ENCODE measurements at regions of chr6 and their contacts with region 1.

Region 1: DNA sequence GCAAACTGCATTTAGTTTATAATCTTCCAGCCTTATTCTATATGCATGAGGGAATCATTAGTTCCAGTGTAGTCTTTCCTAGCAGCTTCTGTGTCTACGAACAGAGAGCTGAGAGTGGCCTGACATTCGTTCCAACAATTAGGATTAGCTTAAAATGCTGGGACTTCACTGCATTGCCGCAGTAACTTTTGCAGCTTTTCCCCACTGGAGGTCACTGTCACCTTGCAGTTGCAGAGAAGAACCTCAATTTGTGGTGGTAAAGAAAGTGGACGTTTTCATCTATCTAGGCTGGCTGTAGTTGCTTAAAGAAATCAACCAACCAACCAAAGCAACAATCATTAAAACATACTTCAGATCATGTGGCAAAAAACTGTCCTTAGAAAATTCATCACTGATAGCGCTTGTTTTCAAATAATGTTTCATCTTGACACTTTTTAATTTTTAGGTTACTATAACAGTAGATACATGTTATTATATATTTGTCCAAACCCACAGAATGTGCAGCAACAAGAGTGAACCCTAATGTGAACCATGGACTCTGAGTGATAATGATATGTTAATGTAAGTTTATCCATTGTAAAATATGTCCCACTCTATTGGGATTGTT is 12.2 kb downstream of the MYLK4 start:
- DNase-seq: peak; percentile 39
- CTCF ChIP-seq: peak; percentile 79

Region 2: DNA sequence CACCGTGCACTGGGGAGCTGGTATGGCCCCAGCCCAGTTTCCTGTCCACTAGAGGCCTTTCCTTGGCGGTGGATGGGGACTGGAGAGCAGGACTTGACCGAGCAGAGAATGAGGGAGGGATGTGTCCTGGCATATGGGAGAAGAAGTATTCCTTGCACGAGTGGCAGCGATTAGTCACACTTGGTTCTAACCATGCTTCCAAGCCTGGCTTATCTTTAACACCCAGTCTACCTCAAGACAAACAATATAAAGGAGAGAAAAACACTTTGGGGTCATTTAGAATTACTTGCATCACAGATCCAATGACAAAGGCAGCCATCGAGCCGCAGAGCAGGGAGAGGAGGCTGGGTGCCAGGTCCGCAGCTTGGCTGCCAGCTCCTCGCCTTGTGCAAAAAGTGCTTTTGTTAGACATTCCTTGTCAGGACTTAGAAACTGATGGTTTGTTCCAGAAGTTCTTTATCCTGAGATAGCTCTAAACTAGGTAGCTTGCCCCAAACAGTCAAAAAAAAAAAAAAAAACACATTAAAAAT is 278.2 kb before region 1 on chr6:
- CTCF ChIA-PET with region 1: no interaction called
- POLR2A ChIA-PET with region 1: no interaction called
- DNase-seq: no peak
- CTCF ChIP-seq: no peak

Region 3: DNA sequence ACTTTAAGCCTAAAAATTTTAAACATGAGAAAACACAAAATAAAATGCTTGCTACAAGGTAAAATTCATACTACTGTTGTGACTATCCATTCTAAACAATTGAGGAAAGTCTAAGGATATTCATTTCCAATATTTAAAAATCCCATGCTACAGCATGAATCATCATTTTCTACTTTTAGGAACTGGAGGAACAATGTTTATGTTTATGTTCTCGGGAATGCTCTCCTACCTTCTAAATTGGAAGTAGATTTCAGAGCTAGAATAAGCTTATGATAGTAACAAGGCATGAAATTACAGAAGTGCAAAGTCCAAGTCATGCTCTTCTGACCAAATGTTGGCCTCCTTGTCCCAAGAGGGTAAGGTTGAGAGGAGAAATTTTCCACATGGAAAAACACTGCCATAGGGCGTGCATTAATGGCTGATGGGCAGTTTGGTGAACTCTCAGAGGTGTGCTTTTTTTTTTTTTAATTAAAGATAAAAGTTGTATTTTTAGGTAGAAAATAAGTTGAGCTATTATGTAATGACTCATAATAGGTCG is 18.3 kb after region 1 on chr6:
- CTCF ChIA-PET with region 1: interaction called, 127 read pairs
- POLR2A ChIA-PET with region 1: no interaction called
- DNase-seq: no peak
- CTCF ChIP-seq: no peak

Region 4: DNA sequence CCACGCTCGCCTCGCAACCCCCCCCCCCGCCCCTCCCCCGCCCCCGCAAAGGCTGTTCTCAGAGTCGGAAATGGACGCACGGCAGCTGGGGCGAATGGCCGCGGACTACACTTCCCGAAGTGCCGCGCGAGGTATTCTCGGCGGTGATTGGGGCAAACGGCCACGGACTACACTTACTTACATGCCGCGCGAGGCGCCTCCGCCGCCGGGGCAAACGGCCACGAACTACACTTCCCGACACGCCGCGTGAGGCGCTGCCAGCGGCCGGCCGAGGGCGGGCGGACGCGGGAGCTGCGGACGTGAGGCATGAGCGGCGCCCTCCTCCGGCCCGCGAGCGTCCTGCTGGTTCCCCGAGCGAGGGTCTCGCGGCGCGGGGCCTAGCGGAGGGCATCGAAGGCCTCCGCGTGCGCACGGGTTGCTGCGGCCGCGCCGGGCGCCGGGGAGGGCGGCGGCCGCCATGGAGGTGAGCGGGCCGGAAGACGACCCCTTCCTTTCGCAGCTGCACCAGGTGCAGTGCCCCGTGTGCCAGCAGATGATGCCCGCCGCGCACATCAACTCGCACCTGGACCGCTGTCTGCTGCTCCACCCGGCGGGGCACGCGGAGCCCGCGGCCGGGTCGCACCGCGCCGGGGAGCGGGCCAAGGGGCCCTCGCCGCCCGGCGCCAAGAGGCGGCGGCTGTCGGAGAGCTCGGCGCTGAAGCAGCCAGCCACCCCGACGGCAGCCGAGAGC is 26.9 kb after region 1 on chr6 and contains the start of gene WRNIP1:
- CTCF ChIA-PET with region 1: interaction called, 127 read pairs
- POLR2A ChIA-PET with region 1: no interaction called
- DNase-seq: peak; percentile 96
- CTCF ChIP-seq: peak; percentile 67

Measured in GM10248 (cell line).